HEK293 (cell line): ENCODE measurements at regions of chr1 and their contacts with region 1.

Region 1: GRCh38 chr1:87084244-87084836 is 169.9 kb downstream of the HS2ST1 start:
- H3K4me3 ChIP-seq: no peak overlapping the region
- H3K27ac ChIP-seq: no peak overlapping the region
- H3K4me1 ChIP-seq: no peaks in the 10 kb centered on the region
- CTCF ChIP-seq: no peak

Region 2: GRCh38 chr1:86470859-86471258 is 613.5 kb before region 1 on chr1:
- CTCF ChIA-PET with region 1: interaction called, 13 read pairs
- POLR2A ChIA-PET with region 1: no interaction called
- H3K4me3 ChIP-seq: no peak overlapping the region
- H3K27ac ChIP-seq: no peak overlapping the region
- H3K4me1 ChIP-seq: no peaks in the 10 kb centered on the region
- CTCF ChIP-seq: no peak

Region 3: GRCh38 chr1:86499987-86500593 is 584.2 kb before region 1 on chr1:
- CTCF ChIA-PET with region 1: interaction called, 13 read pairs
- POLR2A ChIA-PET with region 1: no interaction called
- H3K4me3 ChIP-seq: no peak overlapping the region
- H3K27ac ChIP-seq: no peak overlapping the region
- H3K4me1 ChIP-seq: no peaks in the 10 kb centered on the region
- CTCF ChIP-seq: no peak

Region 4: GRCh38 chr1:86782482-86782881 is 301.9 kb before region 1 on chr1:
- CTCF ChIA-PET with region 1: interaction called, 15 read pairs
- POLR2A ChIA-PET with region 1: no interaction called
- H3K4me3 ChIP-seq: no peak overlapping the region
- H3K27ac ChIP-seq: no peak overlapping the region
- H3K4me1 ChIP-seq: peaks cover 18% of the 10 kb centered on the region
- CTCF ChIP-seq: no peak

Region 5: DNA sequence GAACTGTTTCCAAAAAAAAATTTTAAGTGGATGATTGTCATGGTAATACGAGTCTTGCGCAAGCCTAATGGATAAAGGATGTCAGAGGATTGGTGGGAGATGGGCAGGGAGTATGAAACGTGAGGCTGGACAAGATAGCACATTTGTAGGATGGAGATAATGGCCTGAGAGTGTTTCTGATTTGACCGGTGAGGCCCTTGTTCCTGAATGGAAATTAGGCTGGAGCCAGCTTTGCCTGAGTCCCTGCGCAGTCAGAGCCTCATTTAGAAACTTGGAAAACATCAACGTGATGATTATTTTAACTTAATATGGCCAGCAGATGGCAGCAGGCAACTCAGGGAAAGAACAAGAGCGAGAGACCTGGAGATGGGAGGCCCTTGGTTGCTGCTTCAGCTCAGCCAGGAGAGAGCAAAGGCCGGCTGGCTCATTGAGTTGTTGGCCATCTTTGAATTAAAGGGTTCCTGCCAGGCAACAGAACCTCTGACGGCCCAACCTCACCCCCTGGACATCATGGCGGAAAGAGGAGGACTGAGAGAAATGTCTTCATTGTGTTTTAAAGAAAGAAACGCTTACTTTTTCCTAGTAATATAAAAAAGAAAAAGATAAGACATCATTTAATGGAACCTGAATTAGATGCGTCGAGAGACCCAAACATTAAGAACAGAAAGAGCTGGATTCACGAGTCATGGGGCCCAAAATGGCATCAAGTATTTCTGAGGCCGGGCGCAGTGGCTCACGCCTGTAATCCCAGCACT is 250.7 kb before region 1 on chr1:
- CTCF ChIA-PET with region 1: interaction called, 13 read pairs
- POLR2A ChIA-PET with region 1: no interaction called
- H3K4me3 ChIP-seq: no peak overlapping the region
- H3K27ac ChIP-seq: no peak overlapping the region
- H3K4me1 ChIP-seq: no peaks in the 10 kb centered on the region
- CTCF ChIP-seq: peak; percentile 82

Region 6: GRCh38 chr1:86965012-86965826 is 119.1 kb before region 1 on chr1:
- CTCF ChIA-PET with region 1: interaction called, 10 read pairs
- POLR2A ChIA-PET with region 1: no interaction called
- H3K4me3 ChIP-seq: no peak overlapping the region
- H3K27ac ChIP-seq: no peak overlapping the region
- H3K4me1 ChIP-seq: no peaks in the 10 kb centered on the region
- CTCF ChIP-seq: peak; percentile 60

Region 7: GRCh38 chr1:87074001-87074795 is 10.1 kb before region 1 on chr1:
- CTCF ChIA-PET with region 1: interaction called, 11 read pairs
- POLR2A ChIA-PET with region 1: no interaction called
- H3K4me3 ChIP-seq: no peak overlapping the region
- H3K27ac ChIP-seq: no peak overlapping the region
- H3K4me1 ChIP-seq: peaks cover 10% of the 10 kb centered on the region
- CTCF ChIP-seq: no peak